Heart left ventricle (tissue), 16 donors: ENCODE measurements at regions of chr3 and their contacts with region 1.

Region 1: GRCh38 chr3:122514123-122515019 is at the start of gene KPNA1:
- DNase-seq: peak; percentile 86 to 94 (median 90)
- ATAC-seq: peak; percentile 88 to 98 (median 96)
- H3K4me3 ChIP-seq: peak within 1 kb of the TSS; percentile 55 to 93 (median 86)
- H3K27ac ChIP-seq: peak within 1 kb of the TSS; percentile 68 to 99 (median 96)
- H3K4me1 ChIP-seq: peaks cover 0 to 44% (median 31%) of the 10 kb centered on the region in 12 donors
- H3K27me3 ChIP-seq: no peaks in the 10 kb centered on the region
- CTCF ChIP-seq: no peak
- POLR2A ChIP-seq: peak; percentile 72 to 94
- total RNA-seq, gene KPNA1: 34.1 to 127 (median 72.6) TPM

Region 2: GRCh38 chr3:122415720-122416654 is 98.4 kb before region 1 on chr3 and contains the start of gene WDR5B:
- intact Hi-C with region 1: loop called in 3 of 10 experiments (anchors 1 to 5 kb)
- DNase-seq: peak; percentile 97 to 98 (median 98)
- ATAC-seq: peak; percentile 96 to 98 (median 97)
- H3K4me3 ChIP-seq: peak within 1 kb of the TSS; percentile 65 to 94 (median 78)
- H3K27ac ChIP-seq: peak within 1 kb of the TSS; percentile 82 to 96 (median 90)
- H3K4me1 ChIP-seq: peaks cover 0 to 35% (median 22%) of the 10 kb centered on the region in 12 donors
- H3K27me3 ChIP-seq: no peaks in the 10 kb centered on the region
- CTCF ChIP-seq: peak in 2 of 12 donors; percentile 31 to 34
- POLR2A ChIP-seq: peak; percentile 4 to 82
- total RNA-seq, gene WDR5B: 1.8 to 4.9 (median 2.9) TPM

Region 3: GRCh38 chr3:122458992-122459391 is 55.4 kb before region 1 on chr3:
- intact Hi-C with region 1: loop called in 2 of 10 experiments (anchors 2 to 10 kb)
- DNase-seq: no peak
- ATAC-seq: no peak
- H3K4me3 ChIP-seq: no peak overlapping the region
- H3K27ac ChIP-seq: no peak overlapping the region
- H3K4me1 ChIP-seq: no peaks in the 10 kb centered on the region
- H3K27me3 ChIP-seq: no peaks in the 10 kb centered on the region
- CTCF ChIP-seq: peak; percentile 5 to 61 (median 41)
- POLR2A ChIP-seq: no peak

Region 4: DNA sequence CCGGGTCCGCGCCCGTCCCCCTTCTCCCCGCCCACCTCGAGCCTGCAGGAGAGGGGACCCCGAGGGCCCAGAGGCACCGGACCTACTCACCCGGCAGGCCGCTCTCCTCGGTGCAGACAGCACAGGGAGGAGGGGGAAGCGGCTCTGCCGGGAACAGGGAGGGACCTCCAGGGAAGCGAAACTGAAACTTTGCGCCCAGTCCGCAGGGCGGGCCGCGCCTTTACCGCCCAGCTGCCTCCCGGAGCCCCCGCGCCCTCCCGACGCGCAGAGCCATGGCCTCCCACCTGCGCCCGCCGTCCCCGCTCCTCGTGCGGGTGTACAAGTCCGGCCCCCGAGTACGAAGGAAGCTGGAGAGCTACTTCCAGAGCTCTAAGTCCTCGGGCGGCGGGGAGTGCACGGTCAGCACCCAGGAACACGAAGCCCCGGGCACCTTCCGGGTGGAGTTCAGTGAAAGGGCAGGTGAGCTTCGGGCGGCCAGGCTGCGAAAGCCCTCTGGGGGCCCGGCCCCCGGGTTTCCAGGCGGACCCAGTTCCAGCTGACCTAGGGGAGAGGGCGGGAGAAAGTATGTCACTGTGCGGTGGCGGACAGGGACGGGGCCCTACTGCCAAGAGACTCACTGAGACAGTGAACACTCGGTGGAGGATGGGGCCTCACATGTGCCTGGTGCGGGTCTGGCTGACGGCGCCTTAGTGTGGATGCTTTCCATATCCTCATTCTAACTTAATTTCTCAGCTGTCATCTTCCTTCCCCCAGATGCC is 50.0 kb after region 1 on chr3 and contains the starts of genes DTX3L and PARP9:
- intact Hi-C with region 1: loop called in 1 of 10 experiments (anchors 2 kb)
- DNase-seq: peak; percentile 89 to 92 (median 90)
- ATAC-seq: peak; percentile 94 to 99 (median 99)
- H3K4me3 ChIP-seq: peak within 1 kb of the TSS; percentile 66 to 98 (median 76)
- H3K27ac ChIP-seq: peak within 1 kb of the TSS; percentile 86 to 99 (median 94)
- H3K4me1 ChIP-seq: peaks cover 0 to 76% (median 22%) of the 10 kb centered on the region in 12 donors
- H3K27me3 ChIP-seq: no peaks in the 10 kb centered on the region
- CTCF ChIP-seq: no peak
- POLR2A ChIP-seq: peak in 1 of 2 donors; percentile 49
- total RNA-seq, gene DTX3L: 10.2 to 78.2 (median 13.4) TPM
- total RNA-seq, gene PARP9: 8.5 to 73.0 (median 15.1) TPM